Right cardiac atrium (tissue), 5 donors: ENCODE measurements at regions of chr14 and their contacts with region 1.

Region 1: GRCh38 chr14:92880869-92881289 is 42.1 kb upstream of the CHGA start:
- DNase-seq: peak in 1 of 3 donors; percentile 45
- ATAC-seq: peak; percentile 37 to 60
- H3K4me3 ChIP-seq: no peak overlapping the region
- H3K27ac ChIP-seq: no peak overlapping the region
- H3K4me1 ChIP-seq: peaks cover 6% of the 10 kb centered on the region
- H3K27me3 ChIP-seq: no peaks in the 10 kb centered on the region

Region 2: GRCh38 chr14:93142854-93143652 is 262.2 kb after region 1 on chr14:
- intact Hi-C with region 1: loop called in 2 of 4 experiments (anchors 5 to 10 kb)
- DNase-seq: no peak
- ATAC-seq: no peak
- H3K4me3 ChIP-seq: no peak overlapping the region
- H3K27ac ChIP-seq: no peak overlapping the region
- H3K4me1 ChIP-seq: no peaks in the 10 kb centered on the region
- H3K27me3 ChIP-seq: no peaks in the 10 kb centered on the region

Region 3: DNA sequence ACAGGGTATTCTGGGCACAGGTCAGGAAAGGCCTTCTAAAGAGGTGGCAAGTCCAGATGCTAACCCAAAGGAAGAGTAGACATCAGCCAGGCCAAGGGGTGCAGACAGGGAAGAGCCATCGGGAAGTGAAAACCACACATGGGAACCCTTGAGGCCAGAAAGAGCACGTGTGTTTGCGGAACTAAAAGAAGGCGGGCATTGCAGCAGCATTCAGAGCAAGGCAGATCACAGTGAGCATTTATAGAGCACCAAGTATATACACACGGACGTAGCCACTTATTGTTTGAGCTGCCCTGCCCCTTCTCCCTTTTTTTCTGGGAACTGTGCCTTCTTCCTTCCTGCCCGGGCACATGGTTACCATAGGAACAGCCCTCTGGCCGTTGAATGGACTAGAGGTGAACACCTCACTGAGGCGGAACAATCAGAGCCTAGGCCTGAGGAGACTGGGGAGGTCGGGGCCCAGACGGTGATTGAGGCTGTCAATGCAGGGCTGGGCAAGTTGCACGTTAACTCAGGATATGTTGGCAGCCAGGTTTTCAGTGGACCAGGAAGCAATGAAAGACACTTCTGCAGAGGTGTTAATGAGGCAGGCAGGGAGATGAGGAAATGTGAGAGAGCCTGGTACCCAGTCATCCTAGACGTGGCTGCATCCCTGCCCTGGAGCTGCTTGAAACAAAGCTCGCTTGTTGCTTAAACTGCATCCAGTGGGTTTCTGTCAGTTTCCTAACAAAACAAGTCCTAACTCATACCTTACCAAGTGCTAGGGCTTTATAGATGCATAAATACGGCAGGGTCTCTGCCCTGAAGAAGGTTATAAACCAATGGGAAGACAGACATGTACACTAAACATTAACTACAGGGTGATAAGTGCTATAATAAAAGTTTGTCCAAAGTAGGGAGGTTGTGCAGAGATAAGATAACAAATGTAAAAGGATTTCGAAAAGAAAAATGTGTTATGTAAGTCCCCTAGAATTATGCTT is 269.6 kb after region 1 on chr14:
- intact Hi-C with region 1: loop called in 2 of 4 experiments (anchors 10 kb)
- DNase-seq: no peak
- ATAC-seq: peak; percentile 26 to 54
- H3K4me3 ChIP-seq: no peak overlapping the region
- H3K27ac ChIP-seq: no peak overlapping the region
- H3K4me1 ChIP-seq: no peaks in the 10 kb centered on the region
- H3K27me3 ChIP-seq: no peaks in the 10 kb centered on the region